ENCODE measurements at regions of chr14 and their contacts with region 1.

Region 1: GRCh38 chr14:89033756-89034155 is 209.3 kb downstream of the TTC8 start:
- DNase-seq: peak; percentile 26 to 65 (median 46)
- ATAC-seq: peak; percentile 81
- H3K4me3 ChIP-seq: no peak overlapping the region
- H3K27ac ChIP-seq: peak overlapping the region in 1 of 4 donors; percentile 8
- H3K4me1 ChIP-seq: no peaks in the 10 kb centered on the region
- H3K27me3 ChIP-seq: no peaks in the 10 kb centered on the region
- CTCF ChIP-seq: no peak
- POLR2A ChIP-seq: no peak

Region 2: GRCh38 chr14:88961214-88961613 is 72.5 kb before region 1 on chr14:
- intact Hi-C with region 1: no loop called
- DNase-seq: peak in 3 of 4 donors; percentile 20 to 49 (median 30)
- ATAC-seq: peak; percentile 33
- H3K4me3 ChIP-seq: no peak overlapping the region
- H3K27ac ChIP-seq: no peak overlapping the region
- H3K4me1 ChIP-seq: peaks cover 15% of the 10 kb centered on the region
- H3K27me3 ChIP-seq: no peaks in the 10 kb centered on the region
- CTCF ChIP-seq: no peak
- POLR2A ChIP-seq: no peak

Region 3: GRCh38 chr14:89416002-89416995 is 382.5 kb after region 1 on chr14:
- intact Hi-C with region 1: loop called (anchors 10 kb)
- DNase-seq: peak; percentile 96 to 99 (median 98)
- ATAC-seq: peak; percentile 84
- H3K4me3 ChIP-seq: peak overlapping the region; percentile 59 to 84
- H3K27ac ChIP-seq: peak overlapping the region; percentile 93 to 95 (median 94)
- H3K4me1 ChIP-seq: peaks cover 30% of the 10 kb centered on the region
- H3K27me3 ChIP-seq: no peaks in the 10 kb centered on the region
- CTCF ChIP-seq: no peak
- POLR2A ChIP-seq: peak in 2 of 3 donors; percentile 69 to 79

Region 4: DNA sequence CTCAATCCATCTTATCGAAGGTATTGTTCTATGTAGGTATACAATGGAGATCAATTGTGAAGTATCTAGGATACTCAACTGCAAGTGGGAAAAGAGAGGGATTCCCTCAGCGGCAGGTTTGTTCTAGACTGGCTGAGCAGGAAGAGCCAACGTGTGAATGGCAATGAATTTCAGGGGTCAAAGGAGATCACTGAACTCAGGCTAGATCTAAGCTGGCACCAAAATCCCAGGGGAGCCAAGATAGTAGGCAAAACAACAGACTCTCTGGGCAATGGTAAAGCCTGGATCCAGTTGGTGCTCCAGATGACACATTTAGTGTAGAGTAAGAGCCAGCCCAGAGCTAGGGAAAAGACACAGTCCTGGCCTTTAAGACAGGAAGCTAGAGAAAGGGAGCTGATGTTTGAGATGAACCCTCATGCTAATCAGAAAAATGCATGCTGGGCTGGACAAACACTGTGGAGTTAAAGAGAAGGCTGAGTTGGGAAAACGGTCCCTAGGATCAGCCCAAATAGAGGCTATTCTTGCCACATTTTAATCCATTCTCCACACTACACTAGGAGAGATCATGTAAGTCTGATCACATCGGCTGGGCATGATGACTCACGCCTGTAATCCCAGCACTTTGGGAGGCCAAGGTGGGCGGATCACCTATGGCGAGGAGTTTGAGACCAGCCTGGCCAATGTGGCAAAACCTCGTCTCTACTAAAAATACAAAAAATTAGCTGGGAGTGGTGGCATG is 875.1 kb after region 1 on chr14:
- intact Hi-C with region 1: loop called (anchors 5 kb)
- DNase-seq: no peak
- ATAC-seq: no peak
- H3K4me3 ChIP-seq: no peak overlapping the region
- H3K27ac ChIP-seq: no peak overlapping the region
- H3K4me1 ChIP-seq: peaks cover 17% of the 10 kb centered on the region
- H3K27me3 ChIP-seq: no peaks in the 10 kb centered on the region
- CTCF ChIP-seq: no peak
- POLR2A ChIP-seq: no peak